Heart right ventricle (tissue), 16 donors: ENCODE measurements at regions of chr2 and their contacts with region 1.

Region 1: GRCh38 chr2:85728883-85729824 is 24.6 kb upstream of the ATOH8 start:
- DNase-seq: peak; percentile 90 to 93
- ATAC-seq: peak; percentile 92 to 97 (median 95)
- H3K4me3 ChIP-seq: no peak overlapping the region
- H3K27ac ChIP-seq: peak overlapping the region in 9 of 10 donors; percentile 3 to 72 (median 49)
- H3K4me1 ChIP-seq: peaks cover 0 to 63% (median 38%) of the 10 kb centered on the region in 9 donors
- H3K27me3 ChIP-seq: no peaks in the 10 kb centered on the region
- CTCF ChIP-seq: peak; percentile 91 to 99 (median 98)

Region 2: DNA sequence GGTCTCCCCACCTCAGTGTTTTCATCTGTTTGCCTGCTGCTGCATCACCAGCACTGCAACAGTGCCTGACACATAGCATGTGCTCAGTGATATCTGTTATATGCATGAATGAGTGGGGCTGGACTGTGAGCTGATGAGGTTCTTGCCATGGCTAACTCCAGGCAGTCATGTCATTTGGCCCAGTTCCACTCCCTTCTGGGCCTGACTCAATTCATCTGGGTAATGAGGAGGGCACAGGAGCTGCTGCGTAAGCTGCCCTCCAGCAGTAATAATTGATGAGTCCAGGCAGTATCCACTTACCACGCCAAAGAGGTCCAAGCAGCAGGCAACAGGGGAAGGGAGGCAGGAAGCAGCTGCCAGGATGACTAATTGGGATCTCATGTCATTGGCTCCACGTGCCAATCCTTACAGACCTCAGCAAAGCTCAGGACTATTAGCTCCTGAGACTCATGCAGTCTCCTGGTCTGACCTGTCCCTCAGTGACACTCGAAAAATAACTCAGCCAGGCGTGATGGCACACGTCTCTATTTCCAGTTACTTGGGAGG is 224.3 kb before region 1 on chr2:
- intact Hi-C with region 1: no loop called
- DNase-seq: peak in 1 of 2 donors; percentile 40
- ATAC-seq: peak; percentile 35 to 89 (median 64)
- H3K4me3 ChIP-seq: no peak overlapping the region
- H3K27ac ChIP-seq: peak overlapping the region in 6 of 10 donors; percentile 36 to 74 (median 62)
- H3K4me1 ChIP-seq: peaks cover 0 to 71% (median 41%) of the 10 kb centered on the region in 9 donors
- H3K27me3 ChIP-seq: no peaks in the 10 kb centered on the region
- CTCF ChIP-seq: no peak

Region 3: DNA sequence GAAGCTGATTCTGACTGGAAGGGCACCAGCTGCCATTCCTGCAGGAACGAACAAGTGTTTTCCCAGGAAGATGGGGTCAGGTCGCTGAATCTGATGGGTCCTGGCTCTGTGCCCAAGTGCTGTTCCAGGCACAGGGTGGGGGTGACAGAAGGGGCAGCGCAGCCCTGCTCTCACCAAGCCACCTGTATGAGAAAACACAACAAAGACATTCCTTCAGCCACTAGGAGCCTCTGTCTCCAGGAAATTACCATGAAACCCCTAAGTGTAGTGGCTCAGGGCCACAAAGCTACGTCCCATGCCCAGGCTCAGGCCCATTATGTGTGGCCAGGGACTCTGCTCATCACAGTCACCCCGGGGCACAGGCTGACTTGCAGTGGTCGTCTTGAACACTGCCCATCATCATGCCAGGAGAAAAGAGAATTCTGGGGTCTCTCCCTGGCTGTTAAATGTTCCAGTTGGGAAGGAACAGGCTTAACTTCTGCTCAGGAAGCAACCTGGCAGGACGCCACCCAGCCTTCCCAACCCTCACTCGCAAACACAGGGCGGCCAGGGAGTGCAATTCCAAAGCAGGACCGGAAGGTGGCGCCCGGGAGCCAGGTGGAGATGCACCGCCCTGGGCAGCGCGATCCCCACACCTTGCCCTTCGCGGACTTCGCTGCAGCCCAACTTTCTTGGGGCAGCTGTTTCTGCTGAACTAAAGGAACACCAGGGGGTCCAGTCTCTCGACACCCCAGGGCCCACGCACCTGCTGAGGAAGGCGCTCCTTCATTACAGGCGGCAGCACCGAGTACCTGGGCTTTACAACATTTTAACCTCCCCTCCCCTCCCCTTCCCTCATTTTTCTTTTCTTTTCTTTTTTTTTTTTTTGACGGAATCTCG is 50.1 kb before region 1 on chr2:
- intact Hi-C with region 1: loop called in 1 of 10 experiments (anchors 10 kb)
- DNase-seq: peak; percentile 89 to 91
- ATAC-seq: peak; percentile 86 to 96 (median 92)
- H3K4me3 ChIP-seq: no peak overlapping the region
- H3K27ac ChIP-seq: peak overlapping the region; percentile 2 to 79 (median 46)
- H3K4me1 ChIP-seq: peaks cover 9 to 45% (median 32%) of the 10 kb centered on the region in 9 donors
- H3K27me3 ChIP-seq: no peaks in the 10 kb centered on the region
- CTCF ChIP-seq: peak; percentile 97 to 99 (median 98)

Region 4: GRCh38 chr2:85750587-85751575 is 21.7 kb after region 1 on chr2:
- intact Hi-C with region 1: loop called in 2 of 10 experiments (anchors 1 kb)
- DNase-seq: peak; percentile 74 to 82
- ATAC-seq: peak; percentile 47 to 81 (median 66)
- H3K4me3 ChIP-seq: no peak overlapping the region
- H3K27ac ChIP-seq: peak overlapping the region in 6 of 10 donors; percentile 41 to 92 (median 81)
- H3K4me1 ChIP-seq: peaks cover 15 to 88% (median 60%) of the 10 kb centered on the region in 9 donors
- H3K27me3 ChIP-seq: peaks cover 0 to 52% (median 0%) of the 10 kb centered on the region in 7 donors
- CTCF ChIP-seq: peak; percentile 65 to 91 (median 82)

Region 5: DNA sequence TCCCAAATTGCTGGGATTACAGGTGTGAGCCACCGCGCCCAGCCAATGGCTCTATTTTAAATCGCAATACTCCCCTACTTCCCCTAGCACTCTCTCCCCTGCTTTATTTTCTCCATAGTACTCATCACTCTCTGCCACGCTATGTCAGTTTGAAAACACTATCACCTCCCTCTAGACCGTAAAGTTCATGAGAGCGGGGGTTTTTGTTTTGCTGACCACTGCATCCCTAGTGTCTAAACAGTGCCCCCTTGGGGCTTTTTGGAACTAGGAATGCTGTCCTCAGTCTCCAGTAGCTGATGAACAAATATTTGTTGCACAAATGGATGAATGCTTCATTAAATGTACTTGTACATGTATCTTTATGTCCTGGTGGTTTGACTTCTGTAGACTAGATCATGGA is 68.8 kb after region 1 on chr2:
- intact Hi-C with region 1: loop called in 3 of 10 experiments (anchors 1 to 5 kb)
- DNase-seq: no peak
- ATAC-seq: peak; percentile 18 to 74 (median 48)
- H3K4me3 ChIP-seq: no peak overlapping the region
- H3K27ac ChIP-seq: peak overlapping the region in 4 of 10 donors; percentile 4 to 79 (median 71)
- H3K4me1 ChIP-seq: peaks cover 30 to 67% (median 50%) of the 10 kb centered on the region in 9 donors
- H3K27me3 ChIP-seq: no peaks in the 10 kb centered on the region
- CTCF ChIP-seq: peak; percentile 32 to 76 (median 60)

Region 6: DNA sequence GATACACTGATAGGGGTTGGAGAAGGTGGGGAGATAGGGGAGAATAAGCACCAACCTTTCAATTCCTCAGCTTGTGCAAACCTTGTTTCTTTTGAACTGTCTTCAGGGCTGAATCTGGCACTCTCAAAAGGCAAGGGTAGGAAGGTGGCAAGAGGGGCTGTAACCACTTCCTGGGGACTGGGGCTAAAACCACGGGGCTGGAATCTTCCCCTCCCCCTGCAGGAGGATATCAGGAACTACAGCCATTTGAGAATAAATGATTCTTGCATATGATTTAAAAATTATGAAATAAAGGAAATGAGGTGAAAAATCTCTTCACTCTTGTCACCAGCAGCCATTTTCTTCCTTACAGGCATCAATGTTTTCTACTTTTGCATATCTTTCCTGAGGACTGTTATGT is 75.4 kb after region 1 on chr2:
- intact Hi-C with region 1: loop called in 3 of 10 experiments (anchors 2 to 5 kb)
- DNase-seq: no peak
- ATAC-seq: peak in 1 of 8 donors; percentile 32
- H3K4me3 ChIP-seq: no peak overlapping the region
- H3K27ac ChIP-seq: no peak overlapping the region
- H3K4me1 ChIP-seq: peaks cover 0 to 8% (median 0%) of the 10 kb centered on the region in 9 donors
- H3K27me3 ChIP-seq: no peaks in the 10 kb centered on the region
- CTCF ChIP-seq: peak; percentile 51 to 72 (median 67)

Region 7: GRCh38 chr2:85813982-85814801 is 85.0 kb after region 1 on chr2:
- intact Hi-C with region 1: loop called (anchors 1 to 5 kb)
- DNase-seq: peak; percentile 91 to 93
- ATAC-seq: peak; percentile 91 to 97 (median 94)
- H3K4me3 ChIP-seq: no peak overlapping the region
- H3K27ac ChIP-seq: no peak overlapping the region
- H3K4me1 ChIP-seq: peaks cover 7 to 28% (median 19%) of the 10 kb centered on the region in 9 donors
- H3K27me3 ChIP-seq: no peaks in the 10 kb centered on the region
- CTCF ChIP-seq: peak; percentile 89 to 97 (median 96)